ENCODE measurements at regions of chr1 and their contacts with region 1.

Region 1: DNA sequence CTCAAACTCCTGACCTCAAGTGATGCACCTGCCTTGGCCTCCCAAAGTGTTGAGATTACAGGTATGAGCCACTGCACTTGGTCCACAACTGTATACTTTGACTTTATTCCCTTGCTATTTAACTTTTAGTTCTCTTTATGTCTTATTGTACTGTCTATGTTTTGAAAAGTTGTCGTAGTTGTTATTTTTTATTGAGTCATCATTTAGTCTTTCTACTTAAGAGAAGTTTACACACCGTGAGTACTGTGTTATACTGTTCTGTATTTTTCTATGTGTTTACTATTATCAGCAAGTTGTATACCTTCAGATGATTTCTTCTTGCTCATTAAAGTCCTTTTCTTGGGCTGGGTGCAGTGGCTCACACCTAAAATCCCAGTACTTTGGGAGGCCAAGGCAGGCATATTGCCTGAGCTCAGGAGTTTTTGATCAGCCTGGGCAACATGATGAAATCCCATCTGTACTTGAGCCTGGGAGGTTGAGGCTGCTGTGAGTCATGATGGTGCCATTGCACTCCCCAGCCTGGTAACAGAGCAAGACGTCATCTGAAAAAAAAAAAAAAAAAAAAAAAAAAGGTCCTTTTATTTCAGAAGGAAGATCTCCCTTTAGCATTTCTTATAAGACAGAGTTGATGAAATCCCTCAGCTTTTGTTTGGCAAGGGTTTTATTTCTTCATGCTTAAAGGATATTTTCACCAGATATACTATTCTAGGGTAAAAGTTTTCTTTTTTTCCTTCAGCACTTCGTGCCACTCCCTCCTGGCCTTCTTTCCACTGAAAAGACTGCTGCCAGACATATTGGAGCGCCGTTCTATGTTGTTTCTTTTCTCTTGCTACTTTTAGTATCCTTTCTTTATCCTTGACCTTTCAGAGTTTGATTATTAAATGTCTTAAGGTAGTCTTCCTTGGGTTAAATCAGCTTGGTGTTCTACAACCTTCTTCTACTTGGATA is 47.6 kb downstream of the TNFSF18 start:
- DNase-seq: no peak
- ATAC-seq: no peak
- H3K4me3 ChIP-seq: no peak overlapping the region
- H3K4me3 Mint-ChIP-seq: no peak overlapping the region
- H3K27ac ChIP-seq: no peak overlapping the region
- H3K27ac Mint-ChIP-seq: no peak overlapping the region
- H3K4me1 ChIP-seq: peaks cover 0 to 7% of the 10 kb centered on the region in 2 experiments
- H3K4me1 Mint-ChIP-seq: peaks cover 13 to 17% (median 15%) of the 10 kb centered on the region in 3 donors
- H3K27me3 ChIP-seq: no peaks in the 10 kb centered on the region
- H3K27me3 Mint-ChIP-seq: no peaks in the 10 kb centered on the region

Region 2: GRCh38 chr1:172341697-172342096 is 661.5 kb before region 1 on chr1:
- CTCF ChIA-PET with region 1: interaction called in 1 of 2 experiments, 17 read pairs
- POLR2A ChIA-PET with region 1: no interaction called
- DNase-seq: no peak
- ATAC-seq: no peak
- H3K4me3 ChIP-seq: no peak overlapping the region
- H3K4me3 Mint-ChIP-seq: no peak overlapping the region
- H3K27ac ChIP-seq: no peak overlapping the region
- H3K27ac Mint-ChIP-seq: no peak overlapping the region
- H3K4me1 ChIP-seq: peaks cover 0 to 4% of the 10 kb centered on the region in 2 experiments
- H3K4me1 Mint-ChIP-seq: peaks cover 20 to 27% (median 23%) of the 10 kb centered on the region in 3 donors
- H3K27me3 ChIP-seq: no peaks in the 10 kb centered on the region
- H3K27me3 Mint-ChIP-seq: no peaks in the 10 kb centered on the region